ENCODE measurements at regions of chr20 and their contacts with region 1.

Region 1: DNA sequence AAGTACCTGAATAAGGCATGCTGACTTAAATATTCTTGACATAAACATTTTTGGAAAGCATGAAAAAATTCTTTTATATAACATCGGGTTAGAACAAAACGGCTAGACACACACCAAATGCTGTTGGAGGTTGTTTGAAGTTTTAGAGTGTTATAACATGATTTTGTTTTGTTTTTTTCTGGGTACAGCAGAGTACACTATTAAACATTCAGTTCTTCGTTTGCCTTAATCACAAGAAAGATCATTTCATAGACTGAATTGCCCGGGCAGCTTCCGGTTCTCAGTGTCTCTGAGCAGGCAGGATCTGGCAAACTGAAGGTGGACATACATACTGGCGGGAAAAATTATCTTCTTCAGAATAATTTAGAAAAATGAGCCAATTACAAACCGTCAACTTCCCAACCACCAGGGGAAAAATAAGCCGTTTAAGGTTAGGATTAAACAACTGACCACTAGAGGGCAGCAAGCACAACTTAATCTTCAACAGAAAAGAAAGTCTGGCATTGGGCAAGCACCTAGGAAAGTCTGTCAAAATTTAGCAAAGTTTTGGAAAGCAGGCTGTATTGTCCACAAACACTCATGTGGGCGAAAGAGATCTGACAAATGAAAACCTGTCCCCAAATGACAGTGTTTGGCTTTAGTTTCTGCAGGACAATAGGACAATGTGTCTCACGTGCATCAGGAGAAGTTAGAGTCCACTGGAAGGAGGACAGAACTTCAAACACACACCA is 15.0 kb downstream of the ZNF217 start:
- DNase-seq: no peak
- ATAC-seq: peak; percentile 59
- H3K4me3 Mint-ChIP-seq: no peak overlapping the region; the same call in none of the 2 replicates
- H3K27ac Mint-ChIP-seq: 0 out of 2 replicates have a peak overlapping the region, but pooled peaks have one; percentile 57
- H3K4me1 Mint-ChIP-seq: peaks cover 53% of the 10 kb centered on the region
- H3K27me3 Mint-ChIP-seq: no peaks in the 10 kb centered on the region
- CTCF ChIP-seq: peak; percentile 81

Region 2: DNA sequence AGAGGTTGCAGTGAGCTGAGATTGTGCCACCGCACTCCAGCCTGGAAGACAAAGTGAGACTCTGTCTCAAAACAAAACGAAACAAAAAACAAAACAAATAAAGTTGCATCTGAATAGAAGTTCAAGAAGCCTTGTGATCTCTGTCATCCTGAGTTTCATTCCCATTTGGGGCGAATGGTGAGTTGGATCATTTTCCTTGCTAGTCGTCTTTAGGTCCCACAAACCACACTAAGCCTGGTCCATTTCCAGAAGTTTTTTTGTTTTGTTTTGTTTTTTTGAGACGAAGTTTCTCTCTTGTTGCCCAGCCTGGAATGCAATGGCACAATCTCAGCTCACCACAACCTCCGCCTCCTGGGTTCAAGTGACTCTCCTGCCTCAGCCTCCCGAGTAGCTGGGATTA is 18.8 kb before region 1 on chr20:
- CTCF ChIA-PET with region 1: no interaction called
- POLR2A ChIA-PET with region 1: no interaction called
- DNase-seq: no peak
- ATAC-seq: no peak
- H3K4me3 Mint-ChIP-seq: no peak overlapping the region
- H3K27ac Mint-ChIP-seq: no peak overlapping the region
- H3K4me1 Mint-ChIP-seq: peaks cover 10% of the 10 kb centered on the region
- H3K27me3 Mint-ChIP-seq: no peaks in the 10 kb centered on the region
- CTCF ChIP-seq: no peak

Region 3: GRCh38 chr20:53939572-53940359 is 361.1 kb after region 1 on chr20:
- CTCF ChIA-PET with region 1: interaction called, 11 read pairs
- POLR2A ChIA-PET with region 1: no interaction called
- DNase-seq: peak; percentile 91
- ATAC-seq: peak; percentile 77
- H3K4me3 Mint-ChIP-seq: peak overlapping the region; percentile 59
- H3K27ac Mint-ChIP-seq: peak overlapping the region; percentile 54
- H3K4me1 Mint-ChIP-seq: peaks cover 70% of the 10 kb centered on the region
- H3K27me3 Mint-ChIP-seq: no peaks in the 10 kb centered on the region
- CTCF ChIP-seq: peak; percentile 58

Measured in WTC11 (cell line).